ENCODE measurements at regions of chr18 and their contacts with region 1.

Region 1: GRCh38 chr18:74652392-74652988 is 54.8 kb downstream of the ZNF407 start:
- DNase-seq: no peak
- ATAC-seq: no peak
- H3K4me3 ChIP-seq: no peak overlapping the region
- H3K27ac ChIP-seq: no peak overlapping the region
- H3K4me1 ChIP-seq: no peaks in the 10 kb centered on the region
- H3K27me3 ChIP-seq: no peaks in the 10 kb centered on the region
- CTCF ChIP-seq: peak; percentile 48 to 72 (median 61)
- POLR2A ChIP-seq: no peak

Region 2: GRCh38 chr18:74436158-74436769 is 216.2 kb before region 1 on chr18:
- intact Hi-C with region 1: no loop called
- DNase-seq: peak in 2 of 5 donors; percentile 32 to 45
- ATAC-seq: peak; percentile 47 to 77 (median 60)
- H3K4me3 ChIP-seq: no peak overlapping the region
- H3K27ac ChIP-seq: peak overlapping the region in 7 of 12 donors; percentile 22 to 71 (median 43)
- H3K4me1 ChIP-seq: peaks cover 0 to 16% (median 8%) of the 10 kb centered on the region in 12 donors
- H3K27me3 ChIP-seq: no peaks in the 10 kb centered on the region
- CTCF ChIP-seq: no peak
- POLR2A ChIP-seq: no peak

Region 3: GRCh38 chr18:74669136-74669798 is 16.8 kb after region 1 on chr18:
- intact Hi-C with region 1: loop called in 1 of 10 experiments (anchors 1 kb)
- DNase-seq: no peak
- ATAC-seq: no peak
- H3K4me3 ChIP-seq: no peak overlapping the region
- H3K27ac ChIP-seq: no peak overlapping the region
- H3K4me1 ChIP-seq: no peaks in the 10 kb centered on the region
- H3K27me3 ChIP-seq: no peaks in the 10 kb centered on the region
- CTCF ChIP-seq: no peak
- POLR2A ChIP-seq: no peak

Region 4: GRCh38 chr18:74963820-74964446 is 311.4 kb after region 1 on chr18:
- intact Hi-C with region 1: loop called in 8 of 10 experiments (anchors 2 to 10 kb)
- DNase-seq: peak in 4 of 5 donors; percentile 40 to 55 (median 46)
- ATAC-seq: peak; percentile 69 to 91 (median 90)
- H3K4me3 ChIP-seq: no peak overlapping the region
- H3K27ac ChIP-seq: no peak overlapping the region
- H3K4me1 ChIP-seq: peaks cover 0 to 9% (median 0%) of the 10 kb centered on the region in 12 donors
- H3K27me3 ChIP-seq: no peaks in the 10 kb centered on the region
- CTCF ChIP-seq: peak in 11 of 12 donors; percentile 16 to 60 (median 44)
- POLR2A ChIP-seq: no peak

Region 5: GRCh38 chr18:75161256-75162028 is 509.0 kb after region 1 on chr18:
- intact Hi-C with region 1: loop called in 5 of 10 experiments (anchors 5 to 10 kb)
- DNase-seq: peak in 3 of 5 donors; percentile 34 to 37 (median 36)
- ATAC-seq: peak; percentile 29 to 71 (median 54)
- H3K4me3 ChIP-seq: peak overlapping the region in 11 of 12 donors; percentile 2 to 65 (median 47)
- H3K27ac ChIP-seq: peak overlapping the region in 5 of 12 donors; percentile 7 to 39 (median 27)
- H3K4me1 ChIP-seq: peaks cover 0 to 8% (median 0%) of the 10 kb centered on the region in 12 donors
- H3K27me3 ChIP-seq: no peaks in the 10 kb centered on the region
- CTCF ChIP-seq: peak in 3 of 12 donors; percentile 10 to 26 (median 20)
- POLR2A ChIP-seq: no peak

Region 6: GRCh38 chr18:75727456-75727855 is 1075.0 kb after region 1 on chr18:
- intact Hi-C with region 1: loop called in 3 of 10 experiments (anchors 10 kb)
- DNase-seq: peak in 4 of 5 donors; percentile 20 to 68 (median 39)
- ATAC-seq: peak in 2 of 4 donors; percentile 62 to 63
- H3K4me3 ChIP-seq: no peak overlapping the region
- H3K27ac ChIP-seq: no peak overlapping the region
- H3K4me1 ChIP-seq: no peaks in the 10 kb centered on the region
- H3K27me3 ChIP-seq: peaks cover 0 to 19% (median 0%) of the 10 kb centered on the region in 9 donors
- CTCF ChIP-seq: peak; percentile 2 to 61 (median 44)
- POLR2A ChIP-seq: no peak

Region 7: DNA sequence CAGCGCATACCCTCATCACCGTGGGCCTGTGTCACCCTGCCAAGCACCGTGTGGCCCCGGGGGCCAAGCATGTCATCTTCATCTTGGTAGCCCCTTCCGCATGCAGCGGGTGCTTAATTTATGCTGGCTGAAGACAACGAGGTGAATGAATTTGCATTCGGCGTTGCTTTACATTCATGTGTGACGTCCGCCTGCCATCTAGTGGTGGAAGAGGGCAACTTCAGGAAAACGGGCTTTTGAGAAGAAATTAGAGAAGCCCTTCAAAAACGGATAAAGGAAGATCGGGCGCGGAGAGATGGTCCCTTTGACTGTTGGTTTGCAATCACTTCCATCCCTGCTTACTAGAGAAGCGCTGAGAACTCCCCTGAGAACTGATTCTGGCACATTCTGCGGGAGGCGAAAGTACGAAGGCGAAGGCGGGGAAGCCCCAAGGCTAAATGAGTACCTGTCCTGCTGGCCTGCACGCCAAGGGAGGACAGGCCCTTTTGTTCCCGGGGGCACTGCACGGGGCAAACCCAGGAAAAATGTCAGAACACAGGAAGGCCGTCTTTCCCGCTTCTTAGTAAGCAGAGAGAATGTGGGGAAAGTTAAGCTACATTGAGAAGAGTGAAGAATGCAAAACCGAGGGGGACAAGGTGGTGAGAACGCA is 1696.7 kb after region 1 on chr18:
- intact Hi-C with region 1: loop called in 9 of 10 experiments (anchors 5 to 10 kb)
- DNase-seq: peak in 3 of 5 donors; percentile 35 to 43 (median 41)
- ATAC-seq: peak in 1 of 4 donors; percentile 41
- H3K4me3 ChIP-seq: peak overlapping the region in 1 of 12 donors; percentile 23
- H3K27ac ChIP-seq: no peak overlapping the region
- H3K4me1 ChIP-seq: peaks cover 0 to 11% (median 4%) of the 10 kb centered on the region in 12 donors
- H3K27me3 ChIP-seq: no peaks in the 10 kb centered on the region
- CTCF ChIP-seq: peak; percentile 80 to 93 (median 86)
- POLR2A ChIP-seq: no peak

Measured in heart left ventricle (tissue), 16 donors.